ENCODE measurements at regions of chr2 and their contacts with region 1.

Region 1: GRCh38 chr2:144414324-144414845 is 105.5 kb downstream of the ZEB2 start:
- DNase-seq: peak; percentile 10
- H3K4me3 Mint-ChIP-seq: no peak overlapping the region
- H3K27ac Mint-ChIP-seq: no peak overlapping the region
- H3K4me1 Mint-ChIP-seq: peaks cover 17% of the 10 kb centered on the region
- H3K27me3 Mint-ChIP-seq: peaks cover 5% of the 10 kb centered on the region

Region 2: GRCh38 chr2:143397884-143398614 is 1016.3 kb before region 1 on chr2:
- CTCF ChIA-PET with region 1: no interaction called
- intact Hi-C with region 1: loop called (anchors 5 kb)
- DNase-seq: no peak
- H3K4me3 Mint-ChIP-seq: no peak overlapping the region
- H3K27ac Mint-ChIP-seq: peak overlapping the region; percentile 11
- H3K4me1 Mint-ChIP-seq: peaks cover 47% of the 10 kb centered on the region
- H3K27me3 Mint-ChIP-seq: no peaks in the 10 kb centered on the region

Region 3: DNA sequence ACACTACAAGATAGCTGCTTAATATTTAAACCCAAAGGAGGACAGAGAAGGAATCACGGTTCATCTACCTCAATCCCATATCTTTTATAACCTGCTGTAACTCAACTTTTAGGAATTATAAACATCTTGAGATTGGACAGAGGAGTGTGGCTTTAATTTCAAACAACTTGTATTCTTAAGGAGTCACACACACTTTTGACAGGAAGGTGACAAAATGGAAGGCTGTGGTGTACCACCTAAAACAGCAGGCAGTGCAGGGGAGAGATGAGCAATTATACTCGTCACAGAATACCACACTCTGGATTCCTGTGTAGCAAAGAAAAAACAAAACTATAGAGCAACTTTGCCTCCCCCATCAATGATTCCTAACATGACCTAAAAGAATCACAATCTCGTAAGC is 89.3 kb before region 1 on chr2:
- CTCF ChIA-PET with region 1: no interaction called
- intact Hi-C with region 1: loop called (anchors 1 kb)
- DNase-seq: peak; percentile 70
- H3K4me3 Mint-ChIP-seq: peak overlapping the region; percentile 12
- H3K27ac Mint-ChIP-seq: peak overlapping the region; percentile 83
- H3K4me1 Mint-ChIP-seq: peaks cover 63% of the 10 kb centered on the region
- H3K27me3 Mint-ChIP-seq: no peaks in the 10 kb centered on the region

Region 4: DNA sequence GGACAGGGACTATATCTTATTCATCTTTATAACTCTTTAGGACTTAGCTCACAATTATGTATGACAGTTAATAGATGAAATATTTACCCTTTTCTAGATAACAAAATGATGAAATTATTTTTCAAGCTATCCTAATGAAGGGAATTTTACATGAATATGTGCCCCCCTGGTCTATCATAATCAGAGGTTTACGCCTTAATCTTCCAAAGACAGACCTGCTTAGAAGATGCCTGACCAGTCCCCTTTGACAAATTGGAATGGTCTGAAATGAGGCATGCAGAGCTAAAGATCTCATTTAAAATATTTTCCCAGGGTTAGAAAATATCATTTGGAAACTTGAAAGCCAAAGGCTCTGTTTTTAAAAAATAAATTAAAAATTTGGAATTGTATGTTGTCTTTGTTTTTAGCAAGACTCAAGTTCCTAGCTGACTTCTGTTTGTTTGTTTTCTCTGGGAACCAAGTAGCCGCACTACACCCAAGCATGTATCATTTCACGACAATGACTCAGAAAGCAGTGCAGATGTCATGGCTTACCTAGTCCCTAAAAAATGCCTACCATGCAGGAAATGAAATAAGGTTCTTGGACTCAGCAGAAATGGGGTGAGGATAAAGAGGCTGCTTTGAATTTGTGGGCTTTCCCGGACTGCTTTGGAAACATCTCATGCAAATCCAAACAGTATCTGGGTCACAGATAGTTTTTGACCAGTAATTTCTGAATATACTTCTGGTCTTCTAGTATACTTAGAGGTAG is 56.6 kb before region 1 on chr2:
- CTCF ChIA-PET with region 1: no interaction called
- intact Hi-C with region 1: loop called (anchors 1 kb)
- DNase-seq: peak; percentile 47
- H3K4me3 Mint-ChIP-seq: no peak overlapping the region
- H3K27ac Mint-ChIP-seq: no peak overlapping the region
- H3K4me1 Mint-ChIP-seq: peaks cover 18% of the 10 kb centered on the region
- H3K27me3 Mint-ChIP-seq: no peaks in the 10 kb centered on the region

Region 5: DNA sequence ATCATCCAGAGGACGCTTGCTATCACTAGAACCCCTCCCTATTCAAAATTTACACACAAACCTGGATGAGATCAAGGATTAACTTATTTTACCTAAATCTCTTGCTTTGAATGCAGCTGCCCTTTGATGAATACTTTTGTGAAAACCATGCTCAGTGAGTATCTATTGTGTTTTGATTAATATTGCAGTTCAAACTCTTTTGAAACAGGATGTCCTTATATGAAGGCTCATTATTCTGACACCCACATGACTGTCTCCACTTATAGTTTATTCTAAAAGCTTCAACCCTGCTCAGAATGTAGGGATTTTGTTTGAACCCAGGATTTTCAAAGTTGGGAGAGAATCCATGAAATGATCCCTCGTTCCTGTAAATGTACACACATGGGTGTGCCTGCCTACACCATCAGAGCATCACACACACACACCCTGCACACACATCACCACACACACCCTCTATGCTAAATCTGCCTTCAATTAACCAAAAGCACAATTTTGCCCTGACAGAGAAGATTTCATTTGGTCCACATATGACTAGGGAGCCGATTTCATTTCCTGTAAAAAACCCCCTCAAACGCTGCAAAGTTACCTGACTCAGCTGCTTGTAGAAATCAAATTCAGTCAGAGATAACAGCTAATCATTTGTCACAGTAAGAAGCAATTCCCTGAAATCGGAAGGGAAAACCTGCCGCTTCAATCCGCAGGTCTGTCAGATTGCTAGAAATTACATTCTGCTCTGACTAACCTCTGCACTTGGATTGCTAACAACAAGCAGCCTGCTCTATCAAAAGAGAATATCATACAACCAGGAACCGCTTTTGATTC is 40.3 kb after region 1 on chr2:
- CTCF ChIA-PET with region 1: no interaction called
- intact Hi-C with region 1: loop called (anchors 1 kb)
- DNase-seq: peak; percentile 21
- H3K4me3 Mint-ChIP-seq: no peak overlapping the region
- H3K27ac Mint-ChIP-seq: no peak overlapping the region
- H3K4me1 Mint-ChIP-seq: peaks cover 27% of the 10 kb centered on the region
- H3K27me3 Mint-ChIP-seq: peaks cover 33% of the 10 kb centered on the region

Region 6: GRCh38 chr2:144572977-144573376 is 158.6 kb after region 1 on chr2:
- CTCF ChIA-PET with region 1: no interaction called
- intact Hi-C with region 1: loop called (anchors 5 kb)
- DNase-seq: no peak
- H3K4me3 Mint-ChIP-seq: no peak overlapping the region
- H3K27ac Mint-ChIP-seq: no peak overlapping the region
- H3K4me1 Mint-ChIP-seq: peaks cover 12% of the 10 kb centered on the region
- H3K27me3 Mint-ChIP-seq: peaks cover 14% of the 10 kb centered on the region